Activated T-helper 1 cell treated with anti-CD3 and anti-CD28 coated beads, Interleukin-12 subunit alpha, Interleukin-12 subunit beta, Interleukin-2, Interleukin-4 antibody, amounts not matched to agents 30 ng/mL and 10 ng/mL and 1 ng/mL, durations not matched to agents 14 hours and 24 hours and 36 hours (primary cell): ENCODE measurements at regions of chr10 and their contacts with region 1.

Region 1: DNA sequence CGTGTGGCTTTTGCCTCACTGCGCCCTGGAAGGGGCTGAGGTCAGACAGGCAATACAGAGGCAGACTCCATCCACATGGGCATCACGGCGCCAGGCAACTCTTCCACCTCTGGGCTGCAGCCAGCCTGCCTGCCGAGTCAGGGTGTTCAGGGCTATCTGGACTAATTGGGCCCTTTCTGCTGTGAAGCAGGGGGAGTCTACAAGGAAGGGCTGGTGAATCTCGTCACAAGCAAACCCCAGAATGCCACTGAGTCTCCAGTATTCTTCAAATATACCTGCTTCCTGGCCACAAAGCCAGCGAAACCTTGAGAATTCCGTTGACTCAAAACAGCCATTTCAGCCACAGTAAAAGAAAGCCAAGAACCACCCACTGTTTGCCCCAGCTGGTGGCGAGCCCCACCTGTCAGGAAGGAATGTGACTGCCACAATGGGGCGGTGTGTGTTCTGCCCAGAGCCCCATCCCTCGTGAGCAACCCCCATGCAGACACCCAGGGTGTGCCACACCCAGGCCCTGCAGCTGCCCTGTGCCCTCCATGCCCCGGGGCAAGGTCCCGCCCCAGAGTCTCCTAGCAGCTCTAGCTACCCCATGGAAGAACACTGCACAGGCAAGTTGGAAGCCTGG is 117.3 kb downstream of the FAM53B start:
- DNase-seq: peak; percentile 42
- H3K4me3 Mint-ChIP-seq: peak overlapping the region; percentile 42
- H3K27ac Mint-ChIP-seq: peak overlapping the region; percentile 45
- H3K4me1 Mint-ChIP-seq: peaks cover 31% of the 10 kb centered on the region
- H3K27me3 Mint-ChIP-seq: peaks cover 13% of the 10 kb centered on the region

Region 2: DNA sequence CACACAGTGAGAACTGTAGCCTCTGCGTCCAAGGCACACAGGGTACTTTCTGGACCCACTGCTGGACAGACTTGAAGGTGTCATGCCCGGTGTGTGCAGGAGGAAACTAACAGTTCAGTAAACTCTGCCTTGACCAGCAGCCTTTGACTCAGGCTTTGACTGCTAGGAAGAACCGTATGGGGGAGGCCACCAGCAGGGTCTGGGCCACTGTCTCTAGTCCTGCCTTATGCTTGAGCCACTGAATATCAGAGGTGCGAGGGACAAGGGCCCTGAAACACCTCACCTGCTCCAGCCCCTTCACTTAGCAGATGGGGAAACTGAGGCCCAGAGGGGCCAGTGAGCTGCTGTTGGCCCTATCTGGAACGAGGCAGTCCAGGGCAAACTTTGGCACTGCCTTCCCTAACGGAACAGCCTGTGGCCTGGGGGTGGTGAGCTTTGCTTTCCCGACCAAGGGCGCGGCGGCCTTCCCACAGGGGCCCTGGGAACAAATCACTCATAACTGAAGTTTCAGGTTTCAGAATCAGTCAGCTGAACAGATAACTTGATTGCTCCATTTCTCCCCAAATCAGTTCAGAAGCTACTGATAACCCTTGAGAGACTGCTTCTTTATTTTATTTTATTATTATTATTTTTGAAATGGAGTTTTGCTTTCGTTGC is 12.7 kb before region 1 on chr10:
- intact Hi-C with region 1: loop called (anchors 1 kb)
- DNase-seq: peak; percentile 41
- H3K4me3 Mint-ChIP-seq: no peak overlapping the region
- H3K27ac Mint-ChIP-seq: no peak overlapping the region
- H3K4me1 Mint-ChIP-seq: peaks cover 40% of the 10 kb centered on the region
- H3K27me3 Mint-ChIP-seq: peaks cover 2% of the 10 kb centered on the region